WTC11 (cell line): ENCODE measurements at regions of chr12 and their contacts with region 1.

Region 1: GRCh38 chr12:118436002-118436730 is 59.8 kb downstream of the SUDS3 start:
- DNase-seq: peak; percentile 65
- ATAC-seq: peak; percentile 98
- H3K4me3 Mint-ChIP-seq: no peak overlapping the region
- H3K27ac Mint-ChIP-seq: peak overlapping the region; percentile 6; the same call in 1 of the 2 replicates
- H3K4me1 Mint-ChIP-seq: peaks cover 11% of the 10 kb centered on the region
- H3K27me3 Mint-ChIP-seq: no peaks in the 10 kb centered on the region
- CTCF ChIP-seq: peak; percentile 60

Region 2: GRCh38 chr12:118625050-118625675 is 189.0 kb after region 1 on chr12:
- CTCF ChIA-PET with region 1: interaction called, 12 read pairs
- POLR2A ChIA-PET with region 1: no interaction called
- DNase-seq: no peak
- ATAC-seq: no peak
- H3K4me3 Mint-ChIP-seq: no peak overlapping the region
- H3K27ac Mint-ChIP-seq: no peak overlapping the region
- H3K4me1 Mint-ChIP-seq: peaks cover 15% of the 10 kb centered on the region
- H3K27me3 Mint-ChIP-seq: no peaks in the 10 kb centered on the region
- CTCF ChIP-seq: no peak